MCF 10A (cell line): ENCODE measurements at regions of chr7 and their contacts with region 1.

Region 1: DNA sequence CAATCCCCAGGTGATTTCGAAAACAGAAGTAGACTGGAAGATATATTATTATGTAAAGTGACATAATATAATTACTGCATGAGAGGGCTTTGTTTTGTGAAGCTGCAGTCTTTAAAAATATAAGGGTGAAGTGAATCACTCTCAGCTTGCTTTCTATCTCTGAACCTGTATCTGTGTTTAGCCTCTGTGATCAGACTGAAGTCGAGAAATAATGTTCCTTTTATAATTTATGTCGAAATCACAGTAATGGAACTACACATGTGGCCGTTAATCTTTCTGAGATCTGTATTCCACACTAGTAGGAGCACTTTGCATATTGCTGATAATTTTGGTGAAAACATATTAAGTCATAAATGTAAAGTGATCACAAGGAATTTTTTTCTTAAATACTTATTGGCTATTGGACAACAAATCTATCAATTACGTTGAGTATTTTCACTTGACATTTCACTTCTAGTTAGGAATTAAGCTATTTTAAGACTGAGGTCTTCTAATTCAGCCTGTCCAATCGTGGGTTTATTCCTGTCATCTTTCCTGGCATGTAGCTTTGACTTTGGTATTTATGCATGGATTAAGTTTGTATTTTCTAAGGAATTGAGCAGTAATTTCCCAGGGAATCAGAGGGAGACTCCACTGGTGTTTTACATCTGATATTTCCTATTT is 268.2 kb upstream of the POT1 start:
- DNase-seq: no peak
- H3K4me3 Mint-ChIP-seq: no peak overlapping the region
- H3K27ac Mint-ChIP-seq: no peak overlapping the region
- H3K4me1 Mint-ChIP-seq: peaks cover 5% of the 10 kb centered on the region
- H3K27me3 Mint-ChIP-seq: no peaks in the 10 kb centered on the region
- CTCF ChIP-seq: no peak

Region 2: GRCh38 chr7:124652237-124652636 is 545.6 kb before region 1 on chr7:
- CTCF ChIA-PET with region 1: no interaction called
- POLR2A ChIA-PET with region 1: no interaction called
- intact Hi-C with region 1: no loop called
- DNase-seq: peak; percentile 13
- H3K4me3 Mint-ChIP-seq: no peak overlapping the region
- H3K27ac Mint-ChIP-seq: no peak overlapping the region
- H3K4me1 Mint-ChIP-seq: peaks cover 12% of the 10 kb centered on the region
- H3K27me3 Mint-ChIP-seq: no peaks in the 10 kb centered on the region
- CTCF ChIP-seq: no peak

Region 3: DNA sequence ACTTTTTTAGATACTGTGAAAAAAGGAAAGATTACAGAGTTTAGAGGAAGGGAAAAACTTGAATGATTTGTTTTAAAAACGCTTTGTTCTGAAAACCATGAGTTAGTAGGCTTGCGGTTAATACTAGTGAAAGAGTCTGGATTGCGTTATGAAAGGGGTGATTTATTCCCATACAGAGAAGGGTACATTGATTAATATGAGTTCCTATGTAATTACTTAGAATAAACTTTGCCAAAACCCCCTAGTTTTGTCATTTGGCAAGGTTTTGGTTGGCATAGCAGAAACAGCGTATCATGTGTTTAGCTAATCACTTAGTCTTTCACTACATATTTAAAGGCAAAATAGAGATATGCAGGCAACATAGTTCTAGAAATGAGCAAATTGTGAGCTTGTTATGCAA is 177.1 kb before region 1 on chr7:
- CTCF ChIA-PET with region 1: no interaction called
- POLR2A ChIA-PET with region 1: no interaction called
- intact Hi-C with region 1: no loop called
- DNase-seq: no peak
- H3K4me3 Mint-ChIP-seq: no peak overlapping the region
- H3K27ac Mint-ChIP-seq: no peak overlapping the region
- H3K4me1 Mint-ChIP-seq: peaks cover 6% of the 10 kb centered on the region
- H3K27me3 Mint-ChIP-seq: no peaks in the 10 kb centered on the region
- CTCF ChIP-seq: no peak

Region 4: GRCh38 chr7:125253452-125254182 is 55.8 kb after region 1 on chr7:
- CTCF ChIA-PET with region 1: no interaction called
- POLR2A ChIA-PET with region 1: no interaction called
- intact Hi-C with region 1: loop called (anchors 2 kb)
- DNase-seq: peak; percentile 27
- H3K4me3 Mint-ChIP-seq: peak overlapping the region; percentile 36
- H3K27ac Mint-ChIP-seq: peak overlapping the region; percentile 80
- H3K4me1 Mint-ChIP-seq: peaks cover 16% of the 10 kb centered on the region
- H3K27me3 Mint-ChIP-seq: no peaks in the 10 kb centered on the region
- CTCF ChIP-seq: no peak

Region 5: GRCh38 chr7:125299003-125299765 is 101.3 kb after region 1 on chr7:
- CTCF ChIA-PET with region 1: no interaction called
- POLR2A ChIA-PET with region 1: no interaction called
- intact Hi-C with region 1: no loop called
- DNase-seq: no peak
- H3K4me3 Mint-ChIP-seq: no peak overlapping the region
- H3K27ac Mint-ChIP-seq: no peak overlapping the region
- H3K4me1 Mint-ChIP-seq: no peaks in the 10 kb centered on the region
- H3K27me3 Mint-ChIP-seq: no peaks in the 10 kb centered on the region
- CTCF ChIP-seq: no peak

Region 6: DNA sequence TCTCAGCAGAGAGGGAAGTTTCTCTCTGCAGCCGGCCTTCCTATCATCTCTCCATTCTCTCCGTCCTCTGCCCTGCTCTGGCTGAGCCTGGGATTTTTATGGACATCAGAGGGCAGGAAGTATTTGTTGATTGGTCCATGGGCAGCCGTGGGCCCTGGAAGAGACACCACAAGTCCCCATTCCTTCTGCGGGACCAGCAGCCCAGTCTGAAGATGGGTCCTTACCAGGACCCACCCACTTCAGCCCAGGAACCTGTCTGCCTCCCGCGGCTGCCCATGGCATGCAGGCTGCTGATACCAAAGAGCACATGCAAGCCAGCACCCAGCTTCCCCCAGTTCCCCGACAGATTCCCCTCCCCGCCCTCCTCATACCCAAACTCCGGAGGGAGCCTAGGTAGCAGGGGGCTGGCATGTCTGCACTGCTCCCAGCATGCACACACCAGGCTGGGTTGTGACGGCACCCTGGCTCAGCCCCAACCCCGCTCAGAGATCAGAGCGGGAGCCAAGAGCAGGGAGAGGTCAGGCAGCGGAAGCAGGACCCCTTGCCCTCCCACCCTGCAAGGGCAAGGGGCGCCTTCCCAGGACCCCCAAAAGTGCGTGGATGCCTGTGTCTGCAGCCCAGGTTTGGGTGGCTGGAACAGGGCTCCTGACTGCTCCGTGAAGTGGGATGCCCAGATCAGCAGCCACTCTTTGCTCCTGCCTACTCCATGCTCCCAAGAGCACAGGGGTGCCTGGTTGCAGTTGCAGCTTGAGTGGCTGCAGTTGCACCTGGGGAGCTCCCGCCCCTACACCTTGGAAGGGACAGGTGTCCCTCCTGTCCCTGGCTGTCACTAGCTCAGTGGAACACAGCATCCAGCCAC is 270.4 kb after region 1 on chr7:
- CTCF ChIA-PET with region 1: no interaction called
- POLR2A ChIA-PET with region 1: no interaction called
- intact Hi-C with region 1: no loop called
- DNase-seq: no peak
- H3K4me3 Mint-ChIP-seq: no peak overlapping the region
- H3K27ac Mint-ChIP-seq: no peak overlapping the region
- H3K4me1 Mint-ChIP-seq: no peaks in the 10 kb centered on the region
- H3K27me3 Mint-ChIP-seq: no peaks in the 10 kb centered on the region
- CTCF ChIP-seq: no peak